ENCODE measurements at regions of chrX and their contacts with region 1.

Region 1: DNA sequence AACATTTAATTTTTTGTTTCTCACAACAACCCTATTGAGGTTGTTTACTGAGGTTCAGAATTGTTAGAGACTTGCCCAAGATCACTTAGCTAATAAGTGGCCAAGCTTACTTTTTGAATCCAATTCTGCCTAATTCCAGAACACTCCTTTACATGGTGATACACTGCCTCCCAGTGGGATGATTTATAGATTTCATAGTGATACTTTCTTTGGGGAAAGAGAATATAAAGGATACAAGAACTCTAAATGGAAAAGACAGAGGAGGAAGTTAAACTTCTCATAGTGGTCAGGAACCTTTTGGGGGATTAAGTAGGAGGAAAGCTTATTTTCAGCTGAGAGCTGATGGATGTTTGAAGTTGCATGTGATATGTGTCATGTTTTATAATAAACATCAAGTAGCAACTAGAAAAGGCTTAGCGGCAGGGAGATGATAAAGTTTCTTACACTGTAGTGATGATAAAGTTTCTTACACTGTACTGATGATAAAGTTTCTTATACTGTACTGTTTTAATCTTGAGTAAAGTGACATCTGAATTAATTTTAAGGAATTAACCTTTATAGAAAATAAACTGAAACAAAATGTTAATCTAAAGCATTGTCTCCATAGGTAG is 15.3 kb downstream of the STAG2 start:
- DNase-seq: peak; percentile 32 to 49 (median 45)
- H3K4me3 ChIP-seq: no peak overlapping the region
- H3K4me3 Mint-ChIP-seq: no peak overlapping the region
- H3K27ac ChIP-seq: peak overlapping the region in 1 of 2 donors; percentile 43
- H3K27ac Mint-ChIP-seq: peak overlapping the region in 3 of 7 donors; percentile 8 to 61 (median 60)
- H3K4me1 ChIP-seq: peaks cover 19 to 31% of the 10 kb centered on the region in 2 donors
- H3K4me1 Mint-ChIP-seq: peaks cover 22% of the 10 kb centered on the region
- H3K27me3 ChIP-seq: no peaks in the 10 kb centered on the region
- H3K27me3 Mint-ChIP-seq: peaks cover 0 to 3% (median 0%) of the 10 kb centered on the region in 3 donors
- CTCF ChIP-seq: peak; percentile 31

Region 2: GRCh38 chrX:123833387-123833786 is 143.4 kb before region 1 on chrX:
- intact Hi-C with region 1: loop called in 1 of 2 experiments (anchors 10 kb)
- DNase-seq: peak; percentile 38 to 55 (median 53)
- H3K4me3 ChIP-seq: no peak overlapping the region
- H3K4me3 Mint-ChIP-seq: no peak overlapping the region
- H3K27ac ChIP-seq: no peak overlapping the region
- H3K27ac Mint-ChIP-seq: no peak overlapping the region
- H3K4me1 ChIP-seq: peaks cover 7 to 12% of the 10 kb centered on the region in 2 donors
- H3K4me1 Mint-ChIP-seq: peaks cover 8% of the 10 kb centered on the region
- H3K27me3 ChIP-seq: no peaks in the 10 kb centered on the region
- H3K27me3 Mint-ChIP-seq: peaks cover 1 to 4% (median 3%) of the 10 kb centered on the region in 3 donors
- CTCF ChIP-seq: peak; percentile 74

Region 3: GRCh38 chrX:123884809-123885408 is 91.9 kb before region 1 on chrX:
- intact Hi-C with region 1: loop called in 1 of 2 experiments (anchors 10 kb)
- DNase-seq: peak; percentile 34 to 51 (median 45)
- H3K4me3 ChIP-seq: no peak overlapping the region
- H3K4me3 Mint-ChIP-seq: no peak overlapping the region
- H3K27ac ChIP-seq: no peak overlapping the region
- H3K27ac Mint-ChIP-seq: no peak overlapping the region
- H3K4me1 ChIP-seq: no peaks in the 10 kb centered on the region
- H3K4me1 Mint-ChIP-seq: peaks cover 2% of the 10 kb centered on the region
- H3K27me3 ChIP-seq: no peaks in the 10 kb centered on the region
- H3K27me3 Mint-ChIP-seq: peaks cover 0 to 4% (median 0%) of the 10 kb centered on the region in 3 donors
- CTCF ChIP-seq: peak; percentile 64

Region 4: DNA sequence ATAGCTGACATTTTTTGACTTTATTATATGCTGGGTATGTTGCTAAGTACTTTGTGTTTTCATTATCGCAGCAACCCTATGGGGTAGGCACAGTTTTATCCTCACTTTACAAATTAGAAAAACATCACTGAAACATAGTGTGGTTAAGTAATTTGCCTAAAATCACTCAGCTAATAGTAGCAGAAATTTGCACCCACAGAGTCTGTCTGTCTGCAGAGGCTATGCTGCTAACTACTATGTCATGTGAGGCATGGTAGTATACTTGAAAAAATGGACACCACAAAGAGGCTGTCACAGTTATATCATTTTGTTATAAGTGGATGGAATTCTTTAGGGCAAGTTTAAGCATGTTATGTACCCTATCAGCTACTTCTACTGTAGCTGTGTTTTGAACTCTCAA is 53.7 kb after region 1 on chrX:
- intact Hi-C with region 1: no loop called
- DNase-seq: no peak
- H3K4me3 ChIP-seq: no peak overlapping the region
- H3K4me3 Mint-ChIP-seq: no peak overlapping the region
- H3K27ac ChIP-seq: no peak overlapping the region
- H3K27ac Mint-ChIP-seq: no peak overlapping the region
- H3K4me1 ChIP-seq: no peaks in the 10 kb centered on the region
- H3K4me1 Mint-ChIP-seq: no peaks in the 10 kb centered on the region
- H3K27me3 ChIP-seq: no peaks in the 10 kb centered on the region
- H3K27me3 Mint-ChIP-seq: no peaks in the 10 kb centered on the region
- CTCF ChIP-seq: no peak

Measured in CD14-positive monocyte (primary cell).